GM12878 (cell line): ENCODE measurements at regions of chr12 and their contacts with region 1.

Region 1: GRCh38 chr12:98998697-98999299 is 353.7 kb downstream of the APAF1 start:
- DNase-seq: no peak
- ATAC-seq: peak; percentile 92
- H3K4me3 ChIP-seq: no peak overlapping the region
- H3K27ac ChIP-seq: no peak overlapping the region
- H3K4me1 ChIP-seq: no peaks in the 10 kb centered on the region
- H3K27me3 ChIP-seq: no peaks in the 10 kb centered on the region
- CTCF ChIP-seq: peak; percentile 47 to 80 (median 64); a peak in 5 of 6 replicates
- EP300 ChIP-seq: no peak
- POLR2A ChIP-seq: no peak
- RAD21 ChIP-seq: peak; percentile 86

Region 2: GRCh38 chr12:98424726-98425401 is 573.9 kb before region 1 on chr12:
- CTCF ChIA-PET with region 1: interaction called, 3 read pairs
- POLR2A ChIA-PET with region 1: no interaction called
- RAD21 ChIA-PET with region 1: no interaction called
- SMC1A ChIA-PET with region 1: no interaction called
- in situ Hi-C with region 1: loop called (anchors 25 kb)
- intact Hi-C with region 1: loop called (anchors 10 kb)
- DNase-seq: no peak
- ATAC-seq: peak; percentile 95
- H3K4me3 ChIP-seq: no peak overlapping the region
- H3K27ac ChIP-seq: no peak overlapping the region
- H3K4me1 ChIP-seq: no peaks in the 10 kb centered on the region
- H3K27me3 ChIP-seq: no peaks in the 10 kb centered on the region
- CTCF ChIP-seq: peak; percentile 62 to 71 (median 67)
- EP300 ChIP-seq: no peak
- POLR2A ChIP-seq: no peak
- RAD21 ChIP-seq: peak; percentile 50

Region 3: DNA sequence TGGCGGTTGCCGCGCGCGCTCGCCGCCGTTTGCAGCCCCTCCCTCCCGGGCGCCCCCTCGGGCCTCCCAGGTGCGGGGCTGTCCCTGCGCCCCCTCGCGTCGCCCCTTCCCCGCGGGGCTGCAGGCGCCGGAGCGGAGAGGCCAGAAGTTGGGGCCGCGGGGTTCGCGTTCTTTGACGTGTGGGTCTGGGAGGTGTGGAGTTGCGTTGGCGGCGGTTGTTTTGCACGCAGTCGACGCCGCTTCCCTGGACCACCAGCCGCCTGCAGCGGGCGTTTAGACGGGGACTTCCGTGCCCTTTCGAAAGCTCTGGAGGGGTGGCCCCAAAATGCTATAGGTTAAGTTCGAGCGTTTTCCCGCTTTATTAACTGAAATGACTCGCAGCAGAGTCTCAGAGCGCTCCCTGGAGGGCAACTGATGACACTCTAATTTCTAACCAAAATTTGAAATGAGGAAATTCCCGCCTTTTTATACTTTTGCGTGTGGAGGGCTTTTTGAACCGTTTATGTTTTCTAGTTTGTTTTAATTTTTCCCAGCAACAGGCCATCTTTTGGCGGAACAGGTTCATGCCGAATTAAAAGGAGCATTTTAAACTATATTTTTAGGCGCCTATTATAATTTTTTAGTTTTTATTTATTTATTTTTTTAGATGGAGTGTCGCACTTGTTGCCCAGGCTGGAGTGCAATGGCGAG is 482.5 kb before region 1 on chr12:
- CTCF ChIA-PET with region 1: no interaction called
- POLR2A ChIA-PET with region 1: no interaction called
- RAD21 ChIA-PET with region 1: interaction called, 10 read pairs
- SMC1A ChIA-PET with region 1: no interaction called
- in situ Hi-C with region 1: no loop called
- intact Hi-C with region 1: no loop called
- DNase-seq: peak; percentile 79
- ATAC-seq: peak; percentile 64
- H3K4me3 ChIP-seq: peak overlapping the region; percentile 92
- H3K27ac ChIP-seq: peak overlapping the region; percentile 99
- H3K4me1 ChIP-seq: peaks cover 13% of the 10 kb centered on the region
- H3K27me3 ChIP-seq: no peaks in the 10 kb centered on the region
- CTCF ChIP-seq: peak; percentile 48 to 90 (median 71)
- EP300 ChIP-seq: 0 out of 4 replicates have a peak, but pooled peaks of 1 of the 2 experiments have one; percentile 12
- POLR2A ChIP-seq: peak; percentile 65
- RAD21 ChIP-seq: peak; percentile 76

Region 4: GRCh38 chr12:98644711-98645402 is 353.9 kb before region 1 on chr12 and contains the starts of genes APAF1 and IKBIP:
- CTCF ChIA-PET with region 1: interaction called, 6 read pairs
- POLR2A ChIA-PET with region 1: interaction called, 6 read pairs
- RAD21 ChIA-PET with region 1: interaction called, 11 read pairs
- SMC1A ChIA-PET with region 1: no interaction called
- in situ Hi-C with region 1: no loop called
- intact Hi-C with region 1: no loop called
- DNase-seq: peak; percentile 76
- ATAC-seq: peak; percentile 87
- H3K4me3 ChIP-seq: peak within 1 kb of the TSS; percentile 98
- H3K27ac ChIP-seq: peak within 1 kb of the TSS; percentile 94
- H3K4me1 ChIP-seq: no peaks in the 10 kb centered on the region
- H3K27me3 ChIP-seq: no peaks in the 10 kb centered on the region
- CTCF ChIP-seq: no peak
- EP300 ChIP-seq: 0 out of 4 replicates have a peak, but pooled peaks of 1 of the 2 experiments have one; percentile 5
- POLR2A ChIP-seq: peak; percentile 85
- RAD21 ChIP-seq: no peak
- polyA plus RNA-seq, gene APAF1: 4.2 to 5.0 TPM
- polyA plus RNA-seq, gene IKBIP: 5.4 to 12.2 TPM

Region 5: GRCh38 chr12:98725476-98726247 is 273.1 kb before region 1 on chr12:
- CTCF ChIA-PET with region 1: interaction called, 43 read pairs
- POLR2A ChIA-PET with region 1: no interaction called
- RAD21 ChIA-PET with region 1: interaction called, 17 read pairs
- SMC1A ChIA-PET with region 1: interaction called, 48 read pairs
- in situ Hi-C with region 1: no loop called
- intact Hi-C with region 1: loop called (anchors 1 kb)
- DNase-seq: no peak
- ATAC-seq: peak; percentile 96
- H3K4me3 ChIP-seq: no peak overlapping the region
- H3K27ac ChIP-seq: no peak overlapping the region
- H3K4me1 ChIP-seq: no peaks in the 10 kb centered on the region
- H3K27me3 ChIP-seq: no peaks in the 10 kb centered on the region
- CTCF ChIP-seq: peak; percentile 46 to 48 (median 47); a peak in 5 of 6 replicates
- EP300 ChIP-seq: no peak
- POLR2A ChIP-seq: no peak
- RAD21 ChIP-seq: peak; percentile 59

Region 6: GRCh38 chr12:98754095-98754494 is 244.7 kb before region 1 on chr12:
- CTCF ChIA-PET with region 1: interaction called, 16 read pairs
- POLR2A ChIA-PET with region 1: no interaction called
- RAD21 ChIA-PET with region 1: interaction called, 8 read pairs
- SMC1A ChIA-PET with region 1: interaction called, 7 read pairs
- in situ Hi-C with region 1: no loop called
- intact Hi-C with region 1: no loop called
- DNase-seq: peak; percentile 85
- ATAC-seq: peak; percentile 99
- H3K4me3 ChIP-seq: no peak overlapping the region
- H3K27ac ChIP-seq: no peak overlapping the region; the same call in 1 of the 2 replicates
- H3K4me1 ChIP-seq: peaks cover 5% of the 10 kb centered on the region
- H3K27me3 ChIP-seq: no peaks in the 10 kb centered on the region
- CTCF ChIP-seq: no peak
- EP300 ChIP-seq: peak; percentile 68 to 69; a peak in 3 of 4 replicates
- POLR2A ChIP-seq: no peak
- RAD21 ChIP-seq: no peak

Region 7: GRCh38 chr12:98983647-98984046 is 15.2 kb before region 1 on chr12:
- CTCF ChIA-PET with region 1: interaction called, 23 read pairs
- POLR2A ChIA-PET with region 1: no interaction called
- RAD21 ChIA-PET with region 1: interaction called, 4 read pairs
- SMC1A ChIA-PET with region 1: interaction called, 7 read pairs
- in situ Hi-C with region 1: no loop called
- intact Hi-C with region 1: no loop called
- DNase-seq: no peak
- ATAC-seq: no peak
- H3K4me3 ChIP-seq: no peak overlapping the region
- H3K27ac ChIP-seq: no peak overlapping the region
- H3K4me1 ChIP-seq: peaks cover 6% of the 10 kb centered on the region; the same call in 1 of the 2 replicates
- H3K27me3 ChIP-seq: no peaks in the 10 kb centered on the region
- CTCF ChIP-seq: no peak
- EP300 ChIP-seq: no peak
- POLR2A ChIP-seq: no peak
- RAD21 ChIP-seq: no peak